Adrenal gland (tissue), 19 donors: ENCODE measurements at regions of chr2 and their contacts with region 1.

Region 1: DNA sequence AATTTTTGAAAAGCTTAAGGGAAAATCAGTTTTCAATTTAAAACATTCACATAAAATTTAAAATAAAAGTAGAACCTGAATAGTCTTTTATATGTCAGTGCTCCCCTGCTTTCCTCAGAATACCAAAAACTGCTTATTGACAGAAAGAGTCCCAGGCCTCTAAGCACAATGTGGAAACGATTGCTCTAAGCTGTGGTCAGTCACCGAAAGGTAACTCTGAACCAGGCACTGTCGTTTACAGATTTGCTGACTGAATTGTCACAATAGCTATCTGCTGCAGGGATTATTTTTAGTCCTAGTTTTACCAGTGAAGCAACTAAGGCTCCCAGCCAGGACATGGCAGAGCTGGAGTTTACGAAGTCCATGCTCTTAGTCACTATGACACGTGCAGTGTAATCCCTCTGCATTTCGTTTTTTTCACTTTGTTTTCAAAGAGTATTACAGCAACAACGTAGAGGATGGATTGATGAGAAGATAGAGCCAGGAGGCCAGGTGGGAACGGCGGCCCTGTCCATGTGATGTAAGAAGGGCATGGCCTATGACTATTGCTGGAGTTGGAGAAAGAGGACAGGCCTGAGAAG is 28.1 kb upstream of the TMEM247 start:
- DNase-seq: no peak
- H3K4me3 ChIP-seq: no peak overlapping the region
- H3K27ac ChIP-seq: no peak overlapping the region
- H3K4me1 ChIP-seq: no peaks in the 10 kb centered on the region
- H3K27me3 ChIP-seq: no peaks in the 10 kb centered on the region
- CTCF ChIP-seq: no peak
- POLR2A ChIP-seq: no peak

Region 2: GRCh38 chr2:46364797-46365457 is 86.3 kb before region 1 on chr2:
- intact Hi-C with region 1: loop called (anchors 10 kb)
- DNase-seq: peak in 5 of 7 donors; percentile 28 to 73 (median 58)
- H3K4me3 ChIP-seq: no peak overlapping the region
- H3K27ac ChIP-seq: no peak overlapping the region
- H3K4me1 ChIP-seq: no peaks in the 10 kb centered on the region
- H3K27me3 ChIP-seq: no peaks in the 10 kb centered on the region
- CTCF ChIP-seq: peak; percentile 68 to 86 (median 80)
- POLR2A ChIP-seq: no peak

Region 3: DNA sequence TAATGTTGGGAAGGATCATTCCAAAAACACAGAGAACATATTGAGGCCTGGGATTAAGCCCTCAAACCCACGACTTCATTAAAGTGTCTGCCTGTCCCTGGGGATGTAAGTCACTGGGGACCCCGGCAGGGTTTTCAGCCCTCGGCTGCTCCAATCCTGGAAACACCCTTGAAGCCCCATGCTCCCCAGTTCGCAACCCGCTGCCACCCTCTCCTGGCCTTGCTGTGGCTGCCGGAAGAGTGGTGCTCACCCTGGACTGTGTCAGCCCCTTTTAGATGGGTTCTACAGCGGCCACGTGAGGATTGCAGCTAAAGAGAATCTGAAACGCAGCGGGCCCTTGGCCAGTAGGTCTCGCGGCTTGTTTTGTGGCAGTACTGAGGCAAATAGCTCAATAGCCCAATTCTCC is 74.0 kb before region 1 on chr2:
- intact Hi-C with region 1: loop called in 1 of 2 experiments (anchors 10 kb)
- DNase-seq: peak in 2 of 7 donors; percentile 17 to 35
- H3K4me3 ChIP-seq: no peak overlapping the region
- H3K27ac ChIP-seq: peak overlapping the region in 1 of 5 donors; percentile 3
- H3K4me1 ChIP-seq: no peaks in the 10 kb centered on the region
- H3K27me3 ChIP-seq: no peaks in the 10 kb centered on the region
- CTCF ChIP-seq: no peak
- POLR2A ChIP-seq: no peak